ENCODE measurements at regions of chr11 and their contacts with region 1.

Region 1: DNA sequence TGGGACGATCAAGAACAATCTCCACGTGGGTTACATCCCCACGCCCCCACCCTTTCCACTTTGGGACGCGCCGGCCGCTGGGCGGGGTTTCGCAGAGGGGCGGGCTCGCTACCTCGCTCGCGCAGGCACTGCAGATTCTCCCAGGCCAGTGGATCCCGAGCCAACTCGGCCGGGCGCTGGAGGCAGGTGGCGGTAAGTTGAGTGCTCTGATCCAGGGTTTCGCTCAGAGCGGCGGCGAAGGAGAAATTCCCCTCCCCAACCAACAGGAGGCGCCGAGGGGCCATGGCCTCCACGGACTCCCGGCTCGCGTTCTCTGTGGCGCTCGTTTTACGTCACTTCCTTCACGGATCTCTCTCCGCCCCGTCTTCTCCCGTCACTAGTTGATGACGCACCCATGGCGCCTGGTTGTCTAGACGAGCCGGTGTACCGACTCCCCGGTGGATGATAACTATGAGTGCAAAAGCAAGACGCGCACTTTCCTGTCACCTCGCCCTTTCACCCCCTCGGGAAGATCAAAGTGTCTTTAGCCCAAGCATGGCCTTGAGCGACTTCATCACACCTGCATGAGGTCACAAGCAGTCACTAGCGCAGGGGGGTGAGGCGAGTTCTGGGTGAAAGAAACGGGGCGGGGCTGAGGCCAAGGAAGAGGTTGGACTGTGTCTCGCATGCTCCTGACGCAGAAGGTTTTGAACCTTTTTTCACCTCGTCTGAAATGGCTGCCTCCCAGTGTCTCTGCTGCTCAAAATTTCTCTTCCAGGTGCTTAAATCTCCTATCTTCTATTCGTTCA is at the starts of genes CFAP68 and FDXACB1:
- DNase-seq: peak; percentile 96
- H3K4me3 ChIP-seq: peak within 1 kb of the TSS; percentile 65
- H3K27ac ChIP-seq: peak within 1 kb of the TSS; percentile 88
- H3K4me1 ChIP-seq: peaks cover 10% of the 10 kb centered on the region
- H3K27me3 ChIP-seq: no peaks in the 10 kb centered on the region
- CTCF ChIP-seq: peak; percentile 97
- total RNA-seq, gene CFAP68: 27.4 and 46.8 TPM in 2 replicates
- total RNA-seq, gene FDXACB1: 2.1 and 2.2 TPM in 2 replicates

Region 2: GRCh38 chr11:111918390-111919258 is 39.6 kb after region 1 on chr11 and contains the start of gene C11orf52:
- CTCF ChIA-PET with region 1: no interaction called
- POLR2A ChIA-PET with region 1: no interaction called
- intact Hi-C with region 1: loop called (anchors 2 kb)
- DNase-seq: peak; percentile 84 to 99
- H3K4me3 ChIP-seq: peak within 1 kb of the TSS; percentile 49; the same call in 1 of the 2 replicates
- H3K27ac ChIP-seq: peak within 1 kb of the TSS; percentile 66
- H3K4me1 ChIP-seq: peaks cover 33% of the 10 kb centered on the region
- H3K27me3 ChIP-seq: no peaks in the 10 kb centered on the region
- CTCF ChIP-seq: 0 out of 2 replicates have a peak, but pooled peaks have one; percentile 13
- total RNA-seq, gene C11orf52: 2.9 and 6.4 TPM in 2 replicates

Region 3: DNA sequence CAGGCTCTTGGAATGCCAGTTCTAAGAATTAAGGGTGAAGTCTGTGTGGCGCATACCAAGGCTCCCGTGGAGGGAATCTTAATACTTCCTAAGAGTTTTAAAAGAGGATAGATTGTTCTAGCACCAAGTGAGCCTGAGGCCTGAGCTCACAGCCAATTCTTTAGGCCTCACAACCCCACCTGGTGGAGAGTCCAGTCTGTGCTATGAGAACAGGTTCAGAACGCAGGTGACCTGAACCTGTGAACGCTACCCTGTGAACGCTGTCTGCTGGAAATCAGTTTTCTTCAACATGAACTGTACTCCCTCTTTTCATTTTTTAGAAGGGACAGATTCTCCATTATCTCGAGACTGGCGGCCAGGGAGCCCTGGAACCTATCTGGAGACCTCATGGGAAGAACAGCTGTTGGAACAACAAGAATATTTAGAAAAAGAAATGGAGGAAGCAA is 103.0 kb after region 1 on chr11:
- CTCF ChIA-PET with region 1: no interaction called
- POLR2A ChIA-PET with region 1: no interaction called
- intact Hi-C with region 1: loop called (anchors 1 kb)
- DNase-seq: peak; percentile 53 to 58
- H3K4me3 ChIP-seq: no peak overlapping the region
- H3K27ac ChIP-seq: no peak overlapping the region
- H3K4me1 ChIP-seq: 0 out of 2 replicates have a peak, but pooled peaks cover 4% of the 10 kb centered on the region
- H3K27me3 ChIP-seq: 0 out of 2 replicates have a peak, but pooled peaks cover 12% of the 10 kb centered on the region
- CTCF ChIP-seq: peak; percentile 86

Region 4: GRCh38 chr11:112086422-112087191 is 207.6 kb after region 1 on chr11 and contains the starts of genes SDHD and TIMM8B:
- CTCF ChIA-PET with region 1: no interaction called
- POLR2A ChIA-PET with region 1: no interaction called
- intact Hi-C with region 1: loop called (anchors 2 kb)
- DNase-seq: peak; percentile 93 to 95
- H3K4me3 ChIP-seq: peak within 1 kb of the TSS; percentile 96
- H3K27ac ChIP-seq: peak within 1 kb of the TSS; percentile 26
- H3K4me1 ChIP-seq: peaks cover 21% of the 10 kb centered on the region
- H3K27me3 ChIP-seq: no peaks in the 10 kb centered on the region
- CTCF ChIP-seq: no peak
- total RNA-seq, gene SDHD: 99.5 and 122 TPM in 2 replicates
- total RNA-seq, gene TIMM8B: 42.4 and 44.3 TPM in 2 replicates

Region 5: GRCh38 chr11:112280268-112281126 is 401.5 kb after region 1 on chr11:
- CTCF ChIA-PET with region 1: no interaction called
- POLR2A ChIA-PET with region 1: no interaction called
- intact Hi-C with region 1: loop called (anchors 1 kb)
- DNase-seq: peak; percentile 54 to 73
- H3K4me3 ChIP-seq: peak overlapping the region; percentile 34
- H3K27ac ChIP-seq: no peak overlapping the region
- H3K4me1 ChIP-seq: peaks cover 15% of the 10 kb centered on the region
- H3K27me3 ChIP-seq: no peaks in the 10 kb centered on the region
- CTCF ChIP-seq: peak; percentile 81